Left lung (tissue), 14 donors: ENCODE measurements at regions of chr2 and their contacts with region 1.

Region 1: GRCh38 chr2:101823347-101823791 is 125.9 kb downstream of the MAP4K4 start:
- DNase-seq: peak in 2 of 4 donors; percentile 38 to 42
- ATAC-seq: peak; percentile 90
- H3K4me3 ChIP-seq: no peak overlapping the region
- H3K27ac ChIP-seq: no peak overlapping the region
- H3K4me1 ChIP-seq: peaks cover 8 to 42% of the 10 kb centered on the region in 2 donors
- H3K27me3 ChIP-seq: no peaks in the 10 kb centered on the region
- CTCF ChIP-seq: peak; percentile 47 to 66

Region 2: GRCh38 chr2:101770726-101771125 is 52.6 kb before region 1 on chr2:
- intact Hi-C with region 1: loop called in 1 of 2 experiments (anchors 10 kb)
- DNase-seq: no peak
- ATAC-seq: peak; percentile 55
- H3K4me3 ChIP-seq: no peak overlapping the region
- H3K27ac ChIP-seq: no peak overlapping the region
- H3K4me1 ChIP-seq: peaks cover 17 to 77% of the 10 kb centered on the region in 2 donors
- H3K27me3 ChIP-seq: no peaks in the 10 kb centered on the region
- CTCF ChIP-seq: peak; percentile 20 to 22

Region 3: DNA sequence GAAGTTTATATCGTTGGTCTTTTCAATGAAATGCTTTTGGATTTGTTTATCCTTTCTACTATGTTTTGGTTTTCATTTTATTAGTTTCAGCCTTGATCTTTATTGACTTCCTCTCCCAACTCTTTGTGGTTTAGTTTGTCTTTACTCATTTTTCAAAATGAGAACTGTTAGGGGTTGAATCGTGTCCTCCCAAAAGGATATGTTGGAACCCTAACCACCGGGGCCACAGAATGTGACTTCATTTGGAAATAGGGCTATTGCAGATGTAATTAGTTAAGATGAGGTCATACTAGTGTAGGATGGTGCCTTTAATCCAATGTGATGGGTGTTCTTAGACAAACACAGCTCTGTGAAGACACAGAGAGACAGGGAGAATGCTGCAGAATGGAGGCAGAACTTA is 108.0 kb after region 1 on chr2:
- intact Hi-C with region 1: no loop called
- DNase-seq: no peak
- ATAC-seq: no peak
- H3K4me3 ChIP-seq: no peak overlapping the region
- H3K27ac ChIP-seq: peak overlapping the region in 1 of 2 donors; percentile 59
- H3K4me1 ChIP-seq: peaks cover 0 to 11% of the 10 kb centered on the region in 2 donors
- H3K27me3 ChIP-seq: no peaks in the 10 kb centered on the region
- CTCF ChIP-seq: no peak